ENCODE measurements at regions of chr13 and their contacts with region 1.

Region 1: DNA sequence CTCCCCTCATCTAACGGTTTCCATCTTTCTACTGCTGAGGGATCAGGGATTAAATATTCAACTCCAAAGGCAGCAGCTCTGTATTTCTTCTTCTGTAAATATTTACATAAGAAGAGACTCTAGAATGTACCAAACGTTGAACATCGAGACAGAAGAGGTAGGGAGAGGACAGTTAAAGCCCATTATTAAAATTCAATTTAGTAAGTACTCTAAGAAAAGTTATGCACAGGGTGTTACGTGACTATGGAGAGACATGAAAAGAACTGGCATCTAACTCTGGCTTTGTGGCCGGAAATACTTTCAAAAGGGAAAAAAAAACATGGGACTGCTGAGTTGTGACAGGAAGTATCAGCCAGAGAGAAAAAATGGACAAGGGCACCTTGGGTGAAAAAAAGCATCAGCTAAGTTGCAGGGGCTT is 36.7 kb downstream of the LNX2 start:
- DNase-seq: no peak
- ATAC-seq: peak in 5 of 8 donors; percentile 34 to 58 (median 49)
- H3K4me3 ChIP-seq: no peak overlapping the region
- H3K27ac ChIP-seq: peak overlapping the region in 8 of 10 donors; percentile 0 to 70 (median 28)
- H3K4me1 ChIP-seq: peaks cover 6 to 46% (median 21%) of the 10 kb centered on the region in 9 donors
- H3K27me3 ChIP-seq: no peaks in the 10 kb centered on the region
- CTCF ChIP-seq: no peak

Region 2: DNA sequence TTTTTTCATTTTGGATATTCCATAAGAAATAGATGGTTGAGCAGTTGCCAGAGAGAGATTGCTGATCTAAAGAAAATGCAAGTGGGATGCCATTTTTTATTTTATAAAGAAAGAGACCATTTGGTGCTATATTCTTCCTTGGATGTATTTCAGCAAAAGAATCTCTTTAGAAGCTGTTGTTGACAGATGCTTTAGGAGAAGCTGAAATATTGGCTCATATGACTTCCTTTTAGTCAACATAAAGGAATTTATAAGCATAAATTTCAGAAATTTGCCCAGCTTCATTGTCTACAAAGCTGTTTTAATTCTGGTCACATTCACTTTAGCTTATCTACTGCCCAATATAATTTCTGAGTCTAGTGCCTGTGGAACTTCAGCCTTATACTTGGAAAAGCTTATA is 74.9 kb after region 1 on chr13:
- intact Hi-C with region 1: loop called in 1 of 10 experiments (anchors 10 kb)
- DNase-seq: no peak
- ATAC-seq: no peak
- H3K4me3 ChIP-seq: no peak overlapping the region
- H3K27ac ChIP-seq: no peak overlapping the region
- H3K4me1 ChIP-seq: peaks cover 0 to 59% (median 18%) of the 10 kb centered on the region in 9 donors
- H3K27me3 ChIP-seq: no peaks in the 10 kb centered on the region
- CTCF ChIP-seq: no peak

Region 3: DNA sequence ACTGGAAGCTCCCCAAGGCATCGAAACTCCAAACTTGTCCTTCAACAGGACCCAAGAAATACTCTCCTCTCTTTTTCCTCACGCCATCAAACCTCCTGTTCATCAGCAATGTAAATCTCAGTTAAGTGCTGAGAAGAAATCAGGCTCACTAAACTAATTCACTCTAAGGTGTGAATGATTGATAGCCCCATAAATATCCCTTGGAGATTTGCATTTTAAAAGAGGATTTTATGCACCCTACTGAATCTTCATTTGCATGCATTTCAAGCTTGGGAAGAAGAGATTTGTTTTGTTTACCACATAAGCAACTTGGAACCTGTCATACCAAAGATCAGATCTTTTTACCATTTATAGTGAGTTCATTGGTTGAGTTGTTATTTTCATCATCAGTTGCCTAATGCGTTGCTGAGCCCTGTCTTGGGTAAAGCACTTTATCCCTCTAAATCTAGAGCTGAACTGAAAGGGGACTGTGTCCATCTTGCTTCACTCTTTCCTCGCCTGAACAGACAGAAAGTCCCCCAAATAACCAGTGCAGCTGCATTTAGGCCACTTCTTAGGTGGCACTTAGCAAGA is 168.4 kb after region 1 on chr13:
- intact Hi-C with region 1: no loop called
- DNase-seq: no peak
- ATAC-seq: no peak
- H3K4me3 ChIP-seq: no peak overlapping the region
- H3K27ac ChIP-seq: no peak overlapping the region
- H3K4me1 ChIP-seq: no peaks in the 10 kb centered on the region
- H3K27me3 ChIP-seq: peaks cover 0 to 33% (median 7%) of the 10 kb centered on the region in 7 donors
- CTCF ChIP-seq: no peak